SK-N-SH (cell line): ENCODE measurements at regions of chr7 and their contacts with region 1.

Region 1: GRCh38 chr7:148867596-148868377 is 16.3 kb downstream of the EZH2 start:
- DNase-seq: no peak
- H3K4me3 ChIP-seq: no peak overlapping the region
- H3K27ac ChIP-seq: no peak overlapping the region
- H3K4me1 ChIP-seq: peaks cover 2% of the 10 kb centered on the region in 2 experiments; a peak in 2 of 4 replicates
- H3K27me3 ChIP-seq: no peaks in the 10 kb centered on the region
- CTCF ChIP-seq: no peak
- EP300 ChIP-seq: no peak
- RAD21 ChIP-seq: no peak

Region 2: GRCh38 chr7:148884299-148885022 is 16.7 kb after region 1 on chr7:
- CTCF ChIA-PET with region 1: interaction called, 12 read pairs
- POLR2A ChIA-PET with region 1: no interaction called
- DNase-seq: peak; percentile 100
- H3K4me3 ChIP-seq: peak overlapping the region; percentile 75 to 92
- H3K27ac ChIP-seq: peak overlapping the region; percentile 75 to 94
- H3K4me1 ChIP-seq: peaks cover 0 to 8% of the 10 kb centered on the region in 2 experiments; a peak in 2 of 4 replicates
- H3K27me3 ChIP-seq: no peaks in the 10 kb centered on the region
- CTCF ChIP-seq: no peak
- EP300 ChIP-seq: peak in 1 of 2 experiments; percentile 73; a peak in 1 of 4 replicates
- RAD21 ChIP-seq: no peak

Region 3: GRCh38 chr7:149028346-149029109 is 160.7 kb after region 1 on chr7 and contains the start of gene PDIA4:
- CTCF ChIA-PET with region 1: no interaction called
- POLR2A ChIA-PET with region 1: no interaction called
- DNase-seq: peak; percentile 100
- H3K4me3 ChIP-seq: peak within 1 kb of the TSS; percentile 85 to 97
- H3K27ac ChIP-seq: peak within 1 kb of the TSS; percentile 82 to 92
- H3K4me1 ChIP-seq: peaks cover 5 to 17% of the 10 kb centered on the region in 2 experiments; a peak in 3 of 4 replicates
- H3K27me3 ChIP-seq: no peaks in the 10 kb centered on the region
- CTCF ChIP-seq: peak; percentile 36
- EP300 ChIP-seq: peak in 1 of 2 experiments; percentile 51; a peak in 2 of 4 replicates
- RAD21 ChIP-seq: peak; percentile 11; the same call in 1 of the 2 replicates
- polyA plus RNA-seq, gene PDIA4: 393 and 400 TPM in 2 replicates